Activated naive CD4-positive, alpha-beta T cell treated with anti-CD3 and anti-CD28 coated beads, Interleukin-2, amount 10 ng/mL, durations not matched to agents 7 days and 5 days (primary cell): ENCODE measurements at regions of chr14 and their contacts with region 1.

Region 1: DNA sequence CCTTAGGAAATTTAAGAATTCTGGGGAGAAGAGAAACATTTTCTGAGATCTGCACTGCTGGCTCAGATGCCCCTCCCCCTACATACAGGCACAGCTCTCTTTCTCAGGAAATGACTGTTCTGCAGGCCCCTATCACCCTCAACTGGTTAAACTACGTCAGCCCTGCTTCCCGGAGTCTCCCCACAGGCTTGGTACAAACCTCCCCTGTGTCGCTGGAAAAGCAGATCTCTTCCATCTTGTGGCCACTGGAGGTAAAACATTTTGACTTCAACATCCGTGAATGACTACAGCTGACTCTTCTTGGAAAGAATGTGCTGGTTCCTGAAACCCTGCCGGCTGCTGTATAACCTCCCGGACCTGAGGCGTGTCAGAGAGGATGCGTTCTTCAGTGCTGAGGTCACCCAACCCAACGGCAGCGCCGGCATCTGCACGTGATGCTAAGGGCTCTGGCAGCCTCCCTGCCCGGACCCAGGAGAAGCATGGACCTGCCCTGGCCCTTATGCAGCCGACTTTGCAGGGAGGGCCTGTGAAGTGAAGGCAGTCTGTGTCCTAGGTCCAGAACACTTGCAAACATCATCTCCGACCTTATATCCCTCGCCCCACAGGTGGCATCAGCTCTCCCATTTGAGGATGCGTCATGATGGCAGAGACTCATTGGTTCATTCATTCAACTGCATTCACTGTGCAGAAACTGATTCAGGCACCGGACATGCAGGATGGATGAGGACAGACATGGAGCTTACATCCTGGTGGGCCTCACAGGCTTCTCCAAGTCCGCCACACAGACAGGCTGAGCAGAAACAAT is 129.3 kb downstream of the GCH1 start:
- DNase-seq: peak; percentile 86
- H3K4me3 Mint-ChIP-seq: peak overlapping the region; percentile 27
- H3K27ac Mint-ChIP-seq: peak overlapping the region; percentile 79
- H3K4me1 Mint-ChIP-seq: peaks cover 50% of the 10 kb centered on the region
- H3K27me3 Mint-ChIP-seq: peaks cover 33% of the 10 kb centered on the region

Region 2: GRCh38 chr14:54572316-54572715 is 201.1 kb before region 1 on chr14:
- CTCF ChIA-PET with region 1: interaction called, 221 read pairs
- DNase-seq: peak; percentile 46
- H3K4me3 Mint-ChIP-seq: no peak overlapping the region
- H3K27ac Mint-ChIP-seq: no peak overlapping the region
- H3K4me1 Mint-ChIP-seq: peaks cover 6% of the 10 kb centered on the region
- H3K27me3 Mint-ChIP-seq: peaks cover 28% of the 10 kb centered on the region

Region 3: DNA sequence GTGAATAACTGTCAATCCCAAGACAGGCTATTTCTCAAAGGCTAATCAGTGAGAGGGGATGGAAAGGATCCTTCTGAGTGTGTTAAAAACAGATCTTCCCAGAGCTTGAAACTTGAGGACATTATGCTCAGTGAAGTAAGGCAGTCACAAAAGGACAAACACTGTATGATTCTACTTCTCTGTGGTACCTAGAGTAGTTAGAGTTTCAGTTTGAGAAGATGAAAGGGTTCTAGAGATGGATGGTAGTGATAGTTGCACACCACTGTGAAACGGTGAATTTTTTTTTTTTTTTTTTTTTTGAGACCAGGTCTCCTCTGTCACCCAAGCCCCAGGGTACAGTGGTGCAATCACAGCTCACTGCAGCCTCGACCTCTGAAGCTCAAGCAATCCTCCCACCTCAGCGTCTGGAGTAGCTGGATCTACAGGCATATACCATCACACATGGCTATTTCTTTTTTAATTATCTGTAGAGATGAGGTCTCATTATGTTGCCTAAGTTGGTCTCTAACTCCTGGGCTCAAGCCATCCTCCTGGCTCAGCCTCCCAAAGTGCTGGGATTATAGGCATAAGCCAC is 72.6 kb before region 1 on chr14:
- CTCF ChIA-PET with region 1: interaction called, 20 read pairs
- DNase-seq: no peak
- H3K4me3 Mint-ChIP-seq: no peak overlapping the region
- H3K27ac Mint-ChIP-seq: no peak overlapping the region
- H3K4me1 Mint-ChIP-seq: peaks cover 13% of the 10 kb centered on the region
- H3K27me3 Mint-ChIP-seq: peaks cover 41% of the 10 kb centered on the region

Region 4: DNA sequence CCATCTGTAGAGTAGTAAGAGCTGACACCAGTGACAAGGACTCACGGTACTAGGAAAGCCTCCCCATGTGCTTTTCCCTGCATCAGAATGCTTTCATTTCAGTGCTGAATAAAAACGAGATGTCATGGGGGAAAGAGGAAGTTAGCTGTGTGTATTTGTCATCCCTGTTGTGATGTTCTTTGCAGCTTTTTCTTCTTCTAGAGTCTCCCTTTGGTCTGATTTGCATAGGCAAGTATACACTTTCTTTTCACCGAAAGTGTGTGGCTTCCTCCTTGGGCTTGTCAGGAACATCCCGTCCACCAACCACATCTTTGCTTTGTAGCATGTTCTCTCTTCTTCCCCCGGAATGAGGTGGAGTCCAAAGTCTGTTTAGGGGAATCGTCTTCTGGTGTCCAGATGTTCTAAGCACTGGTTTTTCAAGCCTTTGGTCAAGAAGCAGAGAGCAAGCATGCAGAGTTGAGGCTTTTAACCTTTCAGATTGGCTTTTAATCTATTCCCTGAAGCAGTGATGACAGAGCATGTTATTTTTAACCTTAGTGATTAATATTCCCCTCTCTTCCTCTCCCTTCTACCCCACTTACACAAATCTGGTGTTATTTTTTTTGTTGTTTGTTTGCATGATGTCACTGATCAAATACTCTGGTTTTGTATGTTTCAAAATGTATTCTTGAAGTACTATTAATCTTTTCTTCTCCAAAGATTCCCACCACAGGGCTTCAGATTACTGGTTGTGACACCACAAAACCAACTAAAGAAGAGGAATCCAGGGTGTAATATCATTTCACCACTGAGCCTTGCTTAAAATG is 43.0 kb before region 1 on chr14:
- CTCF ChIA-PET with region 1: interaction called, 57 read pairs
- DNase-seq: peak; percentile 52
- H3K4me3 Mint-ChIP-seq: peak overlapping the region; percentile 8
- H3K27ac Mint-ChIP-seq: peak overlapping the region; percentile 86
- H3K4me1 Mint-ChIP-seq: peaks cover 35% of the 10 kb centered on the region
- H3K27me3 Mint-ChIP-seq: peaks cover 27% of the 10 kb centered on the region

Region 5: GRCh38 chr14:54787261-54787660 is 13.9 kb after region 1 on chr14:
- CTCF ChIA-PET with region 1: interaction called, 16 read pairs
- DNase-seq: no peak
- H3K4me3 Mint-ChIP-seq: no peak overlapping the region
- H3K27ac Mint-ChIP-seq: no peak overlapping the region
- H3K4me1 Mint-ChIP-seq: peaks cover 10% of the 10 kb centered on the region
- H3K27me3 Mint-ChIP-seq: peaks cover 4% of the 10 kb centered on the region

Region 6: DNA sequence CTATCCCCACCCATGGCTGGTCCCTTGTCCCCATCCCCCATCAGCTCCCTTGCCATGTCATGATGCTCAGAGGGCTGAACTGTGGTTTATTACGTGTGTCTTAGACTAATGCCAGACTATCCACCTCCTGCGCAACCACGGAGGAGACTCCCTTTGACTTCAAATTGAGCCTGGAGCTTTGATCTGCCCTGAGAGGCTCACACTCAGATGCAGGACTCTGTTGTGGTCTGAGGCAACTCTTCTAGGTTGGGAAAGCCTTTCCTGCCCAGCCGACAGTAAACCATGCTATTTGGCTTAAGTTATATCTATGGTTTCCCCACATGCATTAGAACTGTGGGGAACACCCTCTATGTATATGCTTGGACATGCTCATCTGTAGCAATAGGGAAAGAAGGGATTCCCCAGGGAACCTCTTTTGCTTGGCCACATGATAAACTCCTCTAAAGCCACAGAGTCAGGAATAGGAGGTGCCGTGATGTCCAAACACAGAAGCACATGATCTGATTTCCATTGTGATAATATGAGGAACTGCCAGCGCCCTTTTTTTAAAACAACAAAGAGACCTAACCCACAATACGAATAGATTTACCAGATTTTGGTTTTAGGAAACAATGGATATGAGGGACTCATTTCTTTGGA is 344.5 kb after region 1 on chr14:
- CTCF ChIA-PET with region 1: no interaction called
- DNase-seq: no peak
- H3K4me3 Mint-ChIP-seq: no peak overlapping the region
- H3K27ac Mint-ChIP-seq: no peak overlapping the region
- H3K4me1 Mint-ChIP-seq: peaks cover 8% of the 10 kb centered on the region
- H3K27me3 Mint-ChIP-seq: peaks cover 53% of the 10 kb centered on the region